ENCODE measurements at regions of chr13 and their contacts with region 1.

Region 1: DNA sequence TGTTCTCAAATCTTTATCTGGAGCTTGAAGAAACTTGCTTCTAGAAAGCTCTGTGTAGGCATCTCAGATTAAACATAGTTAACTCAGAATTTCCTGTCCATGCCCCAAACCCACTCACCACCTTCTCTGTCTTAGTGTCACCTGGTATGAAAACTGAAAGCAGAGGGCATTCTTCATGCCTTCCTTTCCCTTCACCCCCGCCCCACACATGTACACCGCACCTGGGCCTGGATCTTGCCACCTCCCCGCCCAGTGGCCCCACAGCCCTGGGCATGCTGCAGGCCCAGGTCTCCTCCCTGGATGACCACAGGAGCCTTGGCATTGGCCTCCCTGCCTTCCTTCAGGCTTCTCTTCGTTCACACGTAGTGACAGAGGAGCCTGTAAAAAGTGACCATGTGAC is 15.8 kb downstream of the CFAP97D2 start:
- DNase-seq: peak in 2 of 9 experiments; percentile 30 to 61
- ATAC-seq: peak; percentile 81
- H3K4me3 ChIP-seq: no peak overlapping the region
- H3K4me3 Mint-ChIP-seq: peak overlapping the region; percentile 8
- H3K27ac ChIP-seq: peak overlapping the region in 1 of 2 experiments; percentile 57
- H3K27ac Mint-ChIP-seq: peak overlapping the region; percentile 60
- H3K4me1 ChIP-seq: peaks cover 18% of the 10 kb centered on the region
- H3K4me1 Mint-ChIP-seq: peaks cover 20% of the 10 kb centered on the region
- H3K27me3 ChIP-seq: no peaks in the 10 kb centered on the region
- H3K27me3 Mint-ChIP-seq: no peaks in the 10 kb centered on the region
- CTCF ChIP-seq: no peak

Region 2: GRCh38 chr13:113518076-113518803 is 676.6 kb before region 1 on chr13:
- CTCF ChIA-PET with region 1: no interaction called
- POLR2A ChIA-PET with region 1: no interaction called
- intact Hi-C with region 1: no loop called
- DNase-seq: peak in 1 of 9 experiments; percentile 28
- ATAC-seq: peak; percentile 62
- H3K4me3 ChIP-seq: no peak overlapping the region
- H3K4me3 Mint-ChIP-seq: peak overlapping the region; percentile 68
- H3K27ac ChIP-seq: no peak overlapping the region
- H3K27ac Mint-ChIP-seq: peak overlapping the region; percentile 62
- H3K4me1 ChIP-seq: peaks cover 9% of the 10 kb centered on the region
- H3K4me1 Mint-ChIP-seq: peaks cover 19% of the 10 kb centered on the region
- H3K27me3 ChIP-seq: no peaks in the 10 kb centered on the region
- H3K27me3 Mint-ChIP-seq: no peaks in the 10 kb centered on the region
- CTCF ChIP-seq: no peak

Region 3: DNA sequence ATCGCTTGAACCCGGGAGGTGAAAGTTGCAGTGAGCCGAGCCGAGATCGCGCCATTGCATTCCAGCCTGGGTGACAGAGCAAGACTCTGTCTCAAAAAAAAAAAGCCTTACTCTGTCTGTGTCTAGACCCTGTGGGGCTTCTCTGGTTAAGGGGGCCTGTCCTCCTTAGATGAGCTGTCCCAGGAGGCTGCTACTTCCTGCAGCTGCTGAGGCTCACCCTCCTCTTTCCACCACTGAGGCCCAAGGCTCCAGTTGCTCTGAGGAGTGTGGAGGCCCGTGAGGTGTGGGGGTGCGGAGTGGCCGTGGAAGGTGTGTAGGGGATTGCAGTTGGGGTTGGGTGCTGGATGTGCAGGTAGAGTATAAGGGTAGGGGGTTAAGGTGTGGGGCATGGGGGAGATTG is 40.4 kb before region 1 on chr13:
- CTCF ChIA-PET with region 1: no interaction called
- POLR2A ChIA-PET with region 1: no interaction called
- intact Hi-C with region 1: no loop called
- DNase-seq: peak in 4 of 9 experiments; percentile 44 to 66 (median 61)
- ATAC-seq: peak; percentile 62
- H3K4me3 ChIP-seq: peak overlapping the region; percentile 23 to 36
- H3K4me3 Mint-ChIP-seq: peak overlapping the region; percentile 72
- H3K27ac ChIP-seq: peak overlapping the region; percentile 46 to 60
- H3K27ac Mint-ChIP-seq: peak overlapping the region; percentile 95
- H3K4me1 ChIP-seq: peaks cover 74% of the 10 kb centered on the region
- H3K4me1 Mint-ChIP-seq: peaks cover 77% of the 10 kb centered on the region
- H3K27me3 ChIP-seq: no peaks in the 10 kb centered on the region
- H3K27me3 Mint-ChIP-seq: no peaks in the 10 kb centered on the region
- CTCF ChIP-seq: no peak

Region 4: GRCh38 chr13:114174529-114174961 is 20.3 kb before region 1 on chr13:
- CTCF ChIA-PET with region 1: no interaction called
- POLR2A ChIA-PET with region 1: no interaction called
- intact Hi-C with region 1: loop called in 1 of 2 experiments (anchors 1 kb)
- DNase-seq: no peak
- ATAC-seq: no peak
- H3K4me3 ChIP-seq: no peak overlapping the region
- H3K4me3 Mint-ChIP-seq: peak overlapping the region; percentile 27
- H3K27ac ChIP-seq: no peak overlapping the region
- H3K27ac Mint-ChIP-seq: peak overlapping the region; percentile 16
- H3K4me1 ChIP-seq: peaks cover 39% of the 10 kb centered on the region
- H3K4me1 Mint-ChIP-seq: peaks cover 39% of the 10 kb centered on the region
- H3K27me3 ChIP-seq: no peaks in the 10 kb centered on the region
- H3K27me3 Mint-ChIP-seq: no peaks in the 10 kb centered on the region
- CTCF ChIP-seq: no peak

Measured in CD8-positive, alpha-beta T cell (primary cell).